MCF 10A (cell line): ENCODE measurements at regions of chr5 and their contacts with region 1.

Region 1: DNA sequence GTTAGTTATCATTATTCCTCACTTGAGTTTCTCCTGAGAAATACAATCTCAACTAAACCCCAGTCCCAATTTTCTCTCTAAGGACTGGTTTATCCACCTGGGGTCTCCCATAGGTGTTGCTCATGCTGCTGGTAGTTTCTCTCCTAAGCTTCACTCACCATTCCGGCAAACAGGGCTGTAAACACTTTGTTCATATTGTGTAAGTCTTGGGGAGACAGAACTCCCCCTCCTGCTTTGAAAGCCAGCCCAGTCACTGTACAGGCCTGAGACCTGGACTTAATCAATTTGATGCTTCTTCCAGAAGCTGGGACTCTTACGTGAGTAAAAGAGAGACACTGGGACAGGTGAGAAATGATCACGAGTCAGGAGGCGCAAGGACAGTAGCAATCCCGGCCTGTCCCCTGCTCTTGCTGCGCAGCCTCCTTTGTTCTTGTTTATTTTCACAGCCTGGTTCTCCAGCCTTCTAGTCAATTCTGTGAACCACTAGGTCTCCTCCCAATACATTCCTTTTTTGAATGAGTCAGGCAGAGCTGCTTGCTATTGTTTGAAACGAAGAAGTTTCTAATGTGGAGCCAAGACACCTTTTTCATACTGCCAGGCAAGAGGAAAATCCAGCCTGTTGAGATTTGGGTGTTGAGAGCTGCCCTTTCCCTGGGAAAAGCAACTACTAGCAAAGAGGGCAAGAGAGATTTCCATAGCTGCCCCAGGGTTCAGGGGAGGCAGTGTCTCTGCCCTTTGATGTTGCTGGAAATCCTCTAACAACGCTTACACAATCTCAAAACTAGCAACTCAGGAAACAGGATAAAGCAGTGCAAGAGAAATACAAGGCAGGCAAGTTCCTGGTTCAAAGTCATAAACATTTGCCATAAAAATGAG is 9.2 kb upstream of the SHROOM1 start:
- DNase-seq: peak; percentile 89
- H3K4me3 Mint-ChIP-seq: peak overlapping the region; percentile 19
- H3K27ac Mint-ChIP-seq: peak overlapping the region; percentile 99
- H3K4me1 Mint-ChIP-seq: peaks cover 30% of the 10 kb centered on the region
- H3K27me3 Mint-ChIP-seq: no peaks in the 10 kb centered on the region
- CTCF ChIP-seq: no peak

Region 2: DNA sequence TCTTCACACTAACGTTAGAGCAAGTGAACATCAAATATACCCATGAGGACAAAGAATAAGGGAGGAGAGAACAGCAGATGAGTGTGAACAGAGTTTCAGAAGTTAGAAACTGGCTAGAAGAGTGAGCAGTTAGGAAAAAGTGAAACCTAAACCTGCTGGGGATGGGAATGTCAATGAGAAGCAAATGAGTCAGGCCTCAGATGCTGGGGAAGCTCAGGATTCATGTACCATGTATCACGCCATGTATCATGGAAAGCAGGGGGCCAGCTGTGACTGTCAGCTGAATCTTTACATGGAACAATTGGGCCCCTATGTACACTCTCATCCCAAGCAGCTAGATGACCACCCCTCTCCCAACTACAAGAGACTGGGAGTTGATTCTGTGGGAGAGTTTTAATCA is 10.4 kb after region 1 on chr5:
- CTCF ChIA-PET with region 1: interaction called, 4 read pairs
- POLR2A ChIA-PET with region 1: interaction called, 20 read pairs
- intact Hi-C with region 1: no loop called
- DNase-seq: no peak
- H3K4me3 Mint-ChIP-seq: no peak overlapping the region
- H3K27ac Mint-ChIP-seq: no peak overlapping the region
- H3K4me1 Mint-ChIP-seq: no peaks in the 10 kb centered on the region
- H3K27me3 Mint-ChIP-seq: no peaks in the 10 kb centered on the region
- CTCF ChIP-seq: no peak

Region 3: DNA sequence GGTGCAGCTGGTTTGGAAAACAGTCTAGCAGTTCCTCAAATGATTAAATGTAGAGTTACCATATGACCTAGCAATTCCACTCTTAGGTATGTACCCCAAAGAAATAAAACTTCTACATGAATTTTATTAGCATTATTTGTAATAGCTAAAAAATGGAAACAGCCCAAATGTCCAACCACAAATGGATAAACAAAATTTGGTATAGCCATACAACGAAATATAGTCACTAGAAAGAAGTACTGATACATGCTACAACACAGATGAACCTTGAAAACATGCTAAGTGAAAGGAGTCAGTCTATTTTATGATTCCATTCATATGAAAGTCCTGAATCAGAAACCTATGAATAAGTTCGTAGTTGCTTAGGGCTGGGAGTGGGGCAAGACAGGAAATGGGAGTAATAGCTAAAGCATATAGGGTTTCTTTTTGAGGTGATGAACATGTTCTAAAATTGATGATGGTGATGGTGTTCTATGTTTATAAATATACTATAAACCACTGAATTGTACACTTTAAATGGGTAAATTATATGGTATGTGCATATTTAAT is 20.3 kb after region 1 on chr5:
- CTCF ChIA-PET with region 1: interaction called, 211 read pairs
- POLR2A ChIA-PET with region 1: interaction called, 176 read pairs
- intact Hi-C with region 1: no loop called
- DNase-seq: no peak
- H3K4me3 Mint-ChIP-seq: no peak overlapping the region
- H3K27ac Mint-ChIP-seq: no peak overlapping the region
- H3K4me1 Mint-ChIP-seq: no peaks in the 10 kb centered on the region
- H3K27me3 Mint-ChIP-seq: peaks cover 13% of the 10 kb centered on the region
- CTCF ChIP-seq: no peak

Region 4: GRCh38 chr5:132949136-132949535 is 109.5 kb after region 1 on chr5:
- CTCF ChIA-PET with region 1: no interaction called
- POLR2A ChIA-PET with region 1: no interaction called
- intact Hi-C with region 1: no loop called
- DNase-seq: no peak
- H3K4me3 Mint-ChIP-seq: no peak overlapping the region
- H3K27ac Mint-ChIP-seq: no peak overlapping the region
- H3K4me1 Mint-ChIP-seq: peaks cover 39% of the 10 kb centered on the region
- H3K27me3 Mint-ChIP-seq: no peaks in the 10 kb centered on the region
- CTCF ChIP-seq: no peak